ENCODE measurements at regions of chr1 and their contacts with region 1.

Region 1: DNA sequence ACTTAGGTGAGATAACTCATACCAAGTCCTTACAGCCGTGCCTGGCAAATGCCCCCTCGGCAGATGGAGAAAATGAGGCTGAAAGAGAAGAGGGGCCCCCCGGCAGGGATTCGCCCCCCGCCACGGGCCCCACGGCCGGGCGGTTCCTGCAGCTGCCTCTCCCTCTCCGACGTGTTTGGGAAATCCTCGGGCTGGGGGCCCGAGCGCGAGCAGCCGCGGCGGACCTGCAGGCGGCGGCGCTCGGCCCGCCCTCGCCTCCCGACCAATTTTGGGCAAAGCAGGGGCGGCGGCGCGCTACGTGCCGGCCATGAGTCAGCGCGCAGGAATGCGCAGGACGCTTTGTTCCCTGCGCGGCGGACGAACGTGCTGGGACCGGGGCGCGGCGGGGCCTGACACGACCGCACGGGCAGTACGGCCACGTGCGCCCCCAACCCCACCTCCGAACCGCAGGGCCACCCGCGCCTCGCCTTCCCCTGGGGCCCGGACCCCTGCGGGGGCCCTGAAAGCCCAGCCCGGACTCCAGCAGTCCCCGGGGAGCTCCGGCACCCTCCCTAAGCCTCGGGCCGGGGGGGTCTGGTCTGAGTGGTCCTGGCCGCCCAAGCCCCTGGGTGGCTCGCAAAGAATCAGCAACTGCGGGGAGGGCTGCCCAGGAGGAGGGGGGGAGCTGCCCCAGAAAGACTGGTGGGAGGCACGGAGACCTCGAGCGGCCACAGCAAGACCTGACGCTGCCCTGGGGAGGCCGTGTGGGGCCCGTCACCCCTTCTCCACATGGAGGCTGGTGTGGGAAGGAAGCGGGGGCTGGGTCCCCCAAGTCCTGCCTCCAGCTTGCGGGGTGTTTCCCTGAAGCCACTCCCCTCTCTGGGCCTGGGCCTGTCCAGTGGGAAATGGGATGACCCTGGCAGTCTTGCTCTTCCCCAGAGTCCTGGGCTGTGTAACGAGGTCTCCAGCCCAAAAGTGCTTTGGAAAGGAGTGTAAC is 11.9 kb upstream of the EDN2 start:
- DNase-seq: peak; percentile 82 to 94
- H3K4me3 ChIP-seq: peak overlapping the region; percentile 49; the same call in 1 of the 2 replicates
- H3K27ac ChIP-seq: peak overlapping the region; percentile 67
- H3K4me1 ChIP-seq: peaks cover 79% of the 10 kb centered on the region
- H3K27me3 ChIP-seq: no peaks in the 10 kb centered on the region
- CTCF ChIP-seq: no peak

Region 2: DNA sequence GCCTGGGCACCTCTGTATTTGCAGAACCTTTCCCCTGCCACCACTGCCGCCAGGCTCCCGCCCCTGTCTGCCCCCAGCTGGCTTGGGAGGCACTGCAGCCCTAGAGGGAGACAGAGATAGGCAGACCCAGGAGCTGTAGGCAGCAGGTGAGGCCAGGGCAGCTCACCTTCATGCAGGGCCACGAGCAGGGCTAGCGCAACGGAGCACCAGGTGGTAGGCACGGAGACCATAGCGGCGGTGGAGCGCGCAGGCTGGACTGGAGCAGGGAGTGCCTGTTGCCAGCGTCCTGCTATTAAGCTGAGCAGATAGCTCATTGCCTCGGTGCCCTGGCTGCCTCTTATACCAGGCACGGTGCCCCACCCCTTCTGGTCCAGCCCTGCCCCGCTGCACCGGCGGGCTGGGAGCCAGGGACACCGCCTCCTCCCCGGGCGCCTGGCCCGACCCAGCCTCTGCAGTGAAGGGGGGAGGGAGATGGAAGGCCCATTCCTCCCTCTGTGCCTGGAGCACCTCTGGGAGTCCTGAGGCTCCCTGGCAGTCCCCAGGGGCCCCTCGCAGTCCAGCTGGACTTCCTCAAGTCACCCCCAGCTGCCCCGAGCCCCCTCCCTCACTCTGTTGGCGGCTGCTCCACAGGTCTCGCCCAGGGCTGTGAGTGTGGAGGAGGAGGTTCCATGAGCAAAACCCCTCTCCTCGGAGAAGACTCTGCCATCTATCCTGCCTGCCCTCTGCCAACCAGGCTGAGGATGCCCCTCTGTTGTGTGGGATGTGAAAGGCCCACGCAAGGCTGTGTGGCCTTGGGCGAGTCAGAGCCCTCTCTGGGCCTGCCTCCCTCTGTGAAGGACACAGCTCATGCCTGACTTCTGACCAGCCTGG is 11.8 kb before region 1 on chr1 and contains the start of gene EDN2:
- CTCF ChIA-PET with region 1: interaction called, 8 read pairs
- POLR2A ChIA-PET with region 1: no interaction called
- intact Hi-C with region 1: loop called (anchors 2 kb)
- DNase-seq: peak in 1 of 2 experiments; percentile 88
- H3K4me3 ChIP-seq: no peak within 1 kb of the TSS
- H3K27ac ChIP-seq: no peak within 1 kb of the TSS
- H3K4me1 ChIP-seq: peaks cover 27% of the 10 kb centered on the region
- H3K27me3 ChIP-seq: no peaks in the 10 kb centered on the region
- CTCF ChIP-seq: peak; percentile 49
- total RNA-seq, gene EDN2: 0.43 and 0.48 TPM in 2 replicates

Region 3: DNA sequence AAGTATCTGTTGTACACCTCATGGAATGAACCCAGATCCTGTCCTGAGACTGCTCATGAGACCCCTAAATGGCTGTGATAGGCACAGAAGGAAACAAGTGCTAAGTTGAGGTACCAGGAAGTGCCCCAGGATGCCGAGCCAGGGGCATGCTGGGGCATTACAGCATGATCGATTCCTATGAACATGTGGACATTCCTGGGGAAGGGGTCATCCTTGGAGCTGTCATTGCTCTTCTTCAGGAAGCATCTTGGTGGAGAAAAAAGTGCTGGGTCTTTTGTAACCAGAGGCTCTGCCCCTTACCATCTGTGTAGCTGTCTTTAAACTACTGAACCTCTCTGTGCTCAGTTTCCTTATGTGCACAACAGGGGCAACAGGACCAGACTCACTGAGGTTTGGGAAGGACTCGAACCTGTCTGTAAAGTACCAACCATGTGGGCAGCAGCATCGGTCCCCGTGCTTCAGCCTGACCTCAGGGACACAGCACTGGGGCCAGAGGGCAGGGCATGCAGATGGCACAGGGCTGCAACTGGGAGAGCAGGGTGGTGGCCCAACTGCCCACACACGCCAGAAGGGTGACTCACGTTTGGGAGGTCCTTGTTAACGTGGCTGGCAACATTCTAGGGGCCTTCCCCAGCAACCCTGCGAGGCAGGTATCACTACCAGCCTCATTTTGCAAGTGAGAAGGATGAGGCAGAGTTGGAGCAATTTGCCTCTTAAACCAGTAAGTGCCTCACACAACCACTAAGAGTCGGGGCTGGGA is 130.4 kb after region 1 on chr1:
- CTCF ChIA-PET with region 1: no interaction called
- POLR2A ChIA-PET with region 1: no interaction called
- intact Hi-C with region 1: loop called (anchors 2 kb)
- DNase-seq: peak; percentile 89 to 90
- H3K4me3 ChIP-seq: no peak overlapping the region
- H3K27ac ChIP-seq: no peak overlapping the region
- H3K4me1 ChIP-seq: peaks cover 26% of the 10 kb centered on the region
- H3K27me3 ChIP-seq: no peaks in the 10 kb centered on the region
- CTCF ChIP-seq: no peak

Measured in PC-9 (cell line).